B cell (primary cell): ENCODE measurements at regions of chr12 and their contacts with region 1.

Region 1: DNA sequence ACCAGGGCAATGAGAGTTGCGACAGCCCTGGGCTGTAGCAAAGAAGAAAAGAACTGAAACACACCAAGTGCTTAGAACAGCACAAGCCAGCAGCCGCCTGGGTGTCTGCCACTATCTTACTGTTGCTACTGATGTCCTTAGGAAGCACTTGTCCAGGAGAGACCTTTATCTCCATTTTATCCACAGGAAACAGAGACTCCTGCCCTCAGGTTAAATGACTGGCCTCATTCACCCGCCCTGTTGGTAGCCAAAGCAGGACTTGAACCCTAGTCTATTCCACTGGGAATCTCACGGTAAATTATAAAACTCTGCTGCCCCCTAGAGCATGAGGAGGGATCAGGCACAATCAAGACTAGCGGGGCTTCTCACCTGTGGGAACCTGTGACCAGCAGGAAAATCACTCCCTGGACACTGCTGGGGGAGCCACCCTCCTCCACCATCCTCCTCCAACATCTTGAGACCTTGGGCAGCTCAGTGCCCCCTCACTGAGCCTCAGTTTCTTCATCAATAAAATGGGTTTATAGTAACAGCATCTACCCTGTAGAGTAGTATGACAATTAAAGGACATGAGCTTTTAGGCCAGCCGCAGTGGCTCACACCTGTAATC is 20.5 kb upstream of the TESC start:
- DNase-seq: peak; percentile 42
- ATAC-seq: no peak
- H3K4me3 ChIP-seq: no peak overlapping the region
- H3K4me3 Mint-ChIP-seq: no peak overlapping the region
- H3K27ac ChIP-seq: no peak overlapping the region
- H3K27ac Mint-ChIP-seq: no peak overlapping the region
- H3K4me1 ChIP-seq: no peaks in the 10 kb centered on the region
- H3K4me1 Mint-ChIP-seq: no peaks in the 10 kb centered on the region
- H3K27me3 ChIP-seq: no peaks in the 10 kb centered on the region
- H3K27me3 Mint-ChIP-seq: no peaks in the 10 kb centered on the region
- CTCF ChIP-seq: peak; percentile 69

Region 2: GRCh38 chr12:116703214-116703795 is 416.4 kb before region 1 on chr12:
- CTCF ChIA-PET with region 1: interaction called, 21 read pairs
- POLR2A ChIA-PET with region 1: no interaction called
- intact Hi-C with region 1: loop called (anchors 1 kb)
- DNase-seq: peak; percentile 74
- ATAC-seq: peak; percentile 81
- H3K4me3 ChIP-seq: no peak overlapping the region
- H3K4me3 Mint-ChIP-seq: no peak overlapping the region
- H3K27ac ChIP-seq: no peak overlapping the region
- H3K27ac Mint-ChIP-seq: no peak overlapping the region
- H3K4me1 ChIP-seq: peaks cover 9 to 11% of the 10 kb centered on the region in 2 donors
- H3K4me1 Mint-ChIP-seq: peaks cover 12% of the 10 kb centered on the region
- H3K27me3 ChIP-seq: peaks cover 0 to 3% (median 0%) of the 10 kb centered on the region in 4 experiments
- H3K27me3 Mint-ChIP-seq: peaks cover 8% of the 10 kb centered on the region
- CTCF ChIP-seq: peak; percentile 98

Region 3: DNA sequence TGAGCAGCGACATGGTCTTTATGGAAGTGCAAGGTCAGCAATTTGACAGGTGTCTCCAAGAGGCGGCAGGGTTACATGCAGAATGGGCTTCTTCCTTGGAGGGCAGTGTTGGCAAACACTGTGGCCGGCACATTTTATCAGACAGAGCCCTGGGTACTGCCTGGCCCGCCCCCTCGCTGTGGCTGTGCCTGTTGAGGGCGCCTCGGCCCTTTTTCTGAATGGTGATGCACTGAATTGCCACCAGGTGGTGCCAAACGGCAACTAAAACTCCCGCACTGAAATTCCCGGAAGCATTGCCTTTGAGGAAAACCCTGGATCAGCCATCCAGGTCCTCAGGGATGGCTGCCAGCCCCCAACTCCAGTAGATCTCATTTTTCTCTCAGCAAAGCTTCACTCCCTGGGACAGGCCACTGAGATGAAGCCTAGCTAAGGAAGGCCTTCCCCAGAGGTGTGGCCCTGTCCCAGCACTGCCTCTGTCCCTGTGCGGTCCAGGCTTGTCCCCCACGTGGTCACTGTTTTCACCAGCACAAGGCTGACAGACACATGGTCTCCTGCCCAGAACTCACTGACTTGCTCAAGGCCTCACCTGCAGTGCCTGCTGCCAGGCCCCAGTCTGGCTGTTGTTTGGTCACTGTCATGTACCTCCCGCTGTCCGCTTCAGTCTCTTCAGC is 94.1 kb before region 1 on chr12:
- CTCF ChIA-PET with region 1: interaction called, 47 read pairs
- POLR2A ChIA-PET with region 1: no interaction called
- intact Hi-C with region 1: loop called (anchors 1 kb)
- DNase-seq: peak; percentile 49
- ATAC-seq: peak; percentile 69
- H3K4me3 ChIP-seq: no peak overlapping the region
- H3K4me3 Mint-ChIP-seq: no peak overlapping the region
- H3K27ac ChIP-seq: no peak overlapping the region
- H3K27ac Mint-ChIP-seq: no peak overlapping the region
- H3K4me1 ChIP-seq: peaks cover 0 to 5% of the 10 kb centered on the region in 2 donors
- H3K4me1 Mint-ChIP-seq: peaks cover 6% of the 10 kb centered on the region
- H3K27me3 ChIP-seq: no peaks in the 10 kb centered on the region
- H3K27me3 Mint-ChIP-seq: no peaks in the 10 kb centered on the region
- CTCF ChIP-seq: peak; percentile 76

Region 4: GRCh38 chr12:117032593-117033381 is 86.9 kb before region 1 on chr12:
- CTCF ChIA-PET with region 1: interaction called, 19 read pairs
- POLR2A ChIA-PET with region 1: no interaction called
- intact Hi-C with region 1: no loop called
- DNase-seq: no peak
- ATAC-seq: peak; percentile 51
- H3K4me3 ChIP-seq: no peak overlapping the region
- H3K4me3 Mint-ChIP-seq: peak overlapping the region; percentile 75
- H3K27ac ChIP-seq: no peak overlapping the region
- H3K27ac Mint-ChIP-seq: no peak overlapping the region
- H3K4me1 ChIP-seq: peaks cover 6 to 21% of the 10 kb centered on the region in 2 donors
- H3K4me1 Mint-ChIP-seq: peaks cover 22% of the 10 kb centered on the region
- H3K27me3 ChIP-seq: peaks cover 0 to 16% (median 0%) of the 10 kb centered on the region in 4 experiments
- H3K27me3 Mint-ChIP-seq: peaks cover 3% of the 10 kb centered on the region
- CTCF ChIP-seq: no peak

Region 5: DNA sequence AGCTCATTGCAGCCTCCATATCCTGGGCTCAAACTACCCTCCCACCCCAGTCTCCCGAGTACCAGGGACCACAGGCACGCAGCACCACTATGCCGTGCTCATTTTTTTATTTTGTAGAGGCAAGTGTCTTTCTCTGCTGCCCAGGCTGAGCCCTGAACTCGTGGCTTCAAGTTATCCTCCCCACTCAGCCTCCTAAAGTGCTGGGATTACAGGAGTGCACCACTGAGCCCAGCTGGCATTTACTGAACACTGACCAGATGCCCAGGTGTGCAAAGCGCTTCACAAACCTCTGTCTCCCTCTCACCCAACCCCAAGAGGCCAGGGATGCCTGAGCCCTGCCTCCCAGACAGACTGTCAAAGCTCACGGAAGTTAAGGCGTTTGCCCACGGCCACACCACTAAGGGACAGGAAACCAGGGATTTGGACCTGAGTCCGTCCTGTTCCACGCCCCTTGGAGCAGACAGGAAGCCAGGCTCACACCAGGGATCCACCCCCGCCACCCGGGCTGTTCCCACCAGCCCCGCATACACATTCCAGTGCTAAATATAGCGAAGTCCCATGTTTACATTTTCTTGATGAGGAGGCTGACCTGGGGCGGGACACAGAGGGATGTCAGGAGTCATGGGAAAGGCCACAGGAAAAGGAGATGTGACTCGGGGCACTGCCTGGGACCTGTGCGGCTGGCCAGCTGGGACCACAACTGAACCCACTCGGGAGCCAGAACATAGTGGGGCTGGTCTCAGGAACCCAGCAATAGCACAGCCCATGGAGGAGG is 71.7 kb before region 1 on chr12:
- CTCF ChIA-PET with region 1: no interaction called
- POLR2A ChIA-PET with region 1: no interaction called
- intact Hi-C with region 1: no loop called
- DNase-seq: no peak
- ATAC-seq: no peak
- H3K4me3 ChIP-seq: no peak overlapping the region
- H3K4me3 Mint-ChIP-seq: no peak overlapping the region
- H3K27ac ChIP-seq: no peak overlapping the region
- H3K27ac Mint-ChIP-seq: no peak overlapping the region
- H3K4me1 ChIP-seq: peaks cover 6 to 24% of the 10 kb centered on the region in 2 donors
- H3K4me1 Mint-ChIP-seq: peaks cover 10% of the 10 kb centered on the region
- H3K27me3 ChIP-seq: no peaks in the 10 kb centered on the region
- H3K27me3 Mint-ChIP-seq: no peaks in the 10 kb centered on the region
- CTCF ChIP-seq: no peak